Sigmoid colon (tissue), 7 donors: ENCODE measurements at regions of chr4 and their contacts with region 1.

Region 1: GRCh38 chr4:186067757-186068385 is 1.1 kb upstream of the TLR3 start:
- DNase-seq: peak; percentile 82
- H3K4me3 ChIP-seq: peak overlapping the region; percentile 46 to 58 (median 54)
- H3K27ac ChIP-seq: peak overlapping the region; percentile 58 to 80 (median 77)
- H3K4me1 ChIP-seq: peaks cover 0 to 19% (median 5%) of the 10 kb centered on the region in 4 donors
- H3K27me3 ChIP-seq: no peaks in the 10 kb centered on the region
- CTCF ChIP-seq: peak in 3 of 4 experiments; percentile 52 to 56 (median 55)
- EP300 ChIP-seq: no peak
- POLR2A ChIP-seq: no peak

Region 2: DNA sequence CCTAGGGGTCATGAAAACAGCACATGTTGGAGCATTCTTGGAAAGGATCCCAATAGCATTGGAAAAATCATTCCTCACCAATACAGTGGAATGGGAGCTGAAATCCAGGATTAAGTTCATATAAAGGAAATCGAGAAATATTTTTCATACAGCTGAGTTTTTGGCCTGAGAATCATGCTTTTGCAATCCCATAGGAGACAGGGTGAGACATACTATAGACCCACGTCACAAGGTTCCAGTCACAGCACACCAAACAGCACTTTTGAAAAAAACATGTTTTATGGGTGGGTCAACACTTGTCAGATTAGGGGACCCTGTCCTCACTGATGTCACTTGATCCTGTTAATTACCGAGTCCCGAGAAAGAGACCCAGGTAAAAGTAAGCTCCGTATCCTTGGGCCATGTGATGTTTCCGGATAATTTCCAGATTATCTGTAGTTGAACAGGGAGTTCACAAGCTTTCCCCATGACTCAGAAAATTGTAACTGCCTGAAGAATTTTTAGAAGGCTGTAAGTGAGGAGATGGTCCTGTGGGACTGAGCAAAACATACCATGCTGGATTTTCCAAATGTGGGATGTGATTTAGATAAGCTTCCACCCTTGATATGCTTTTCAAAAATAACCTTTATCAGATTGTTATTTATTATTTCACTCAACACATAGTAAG is 79.8 kb before region 1 on chr4:
- intact Hi-C with region 1: no loop called
- DNase-seq: no peak
- H3K4me3 ChIP-seq: no peak overlapping the region
- H3K27ac ChIP-seq: no peak overlapping the region
- H3K4me1 ChIP-seq: no peaks in the 10 kb centered on the region
- H3K27me3 ChIP-seq: no peaks in the 10 kb centered on the region
- CTCF ChIP-seq: no peak
- EP300 ChIP-seq: no peak
- POLR2A ChIP-seq: no peak

Region 3: GRCh38 chr4:186104114-186104889 is 36.4 kb after region 1 on chr4 and contains the start of gene FAM149A:
- intact Hi-C with region 1: loop called (anchors 2 kb)
- DNase-seq: peak; percentile 81
- H3K4me3 ChIP-seq: peak within 1 kb of the TSS; percentile 55 to 85 (median 72)
- H3K27ac ChIP-seq: peak within 1 kb of the TSS; percentile 53 to 72 (median 67)
- H3K4me1 ChIP-seq: peaks cover 0 to 18% (median 15%) of the 10 kb centered on the region in 4 donors
- H3K27me3 ChIP-seq: no peaks in the 10 kb centered on the region
- CTCF ChIP-seq: no peak
- EP300 ChIP-seq: no peak
- POLR2A ChIP-seq: no peak
- total RNA-seq, gene FAM149A: 14.6 to 26.0 (median 21.0) TPM

Region 4: GRCh38 chr4:186137196-186137794 is 69.4 kb after region 1 on chr4:
- intact Hi-C with region 1: loop called (anchors 1 kb)
- DNase-seq: no peak
- H3K4me3 ChIP-seq: peak overlapping the region in 2 of 4 donors; percentile 17 to 21
- H3K27ac ChIP-seq: no peak overlapping the region
- H3K4me1 ChIP-seq: peaks cover 0 to 7% (median 2%) of the 10 kb centered on the region in 4 donors
- H3K27me3 ChIP-seq: no peaks in the 10 kb centered on the region
- CTCF ChIP-seq: peak; percentile 17 to 69 (median 42)
- EP300 ChIP-seq: no peak
- POLR2A ChIP-seq: no peak

Region 5: GRCh38 chr4:186144142-186144955 is 76.5 kb after region 1 on chr4:
- intact Hi-C with region 1: loop called (anchors 2 kb)
- DNase-seq: peak; percentile 79
- H3K4me3 ChIP-seq: peak overlapping the region; percentile 55 to 70 (median 64)
- H3K27ac ChIP-seq: peak overlapping the region; percentile 88 to 94 (median 88)
- H3K4me1 ChIP-seq: peaks cover 0 to 16% (median 6%) of the 10 kb centered on the region in 4 donors
- H3K27me3 ChIP-seq: no peaks in the 10 kb centered on the region
- CTCF ChIP-seq: peak; percentile 21 to 52 (median 36)
- EP300 ChIP-seq: no peak
- POLR2A ChIP-seq: no peak

Region 6: GRCh38 chr4:186191200-186192065 is 123.6 kb after region 1 on chr4 and contains the start of gene CYP4V2:
- intact Hi-C with region 1: loop called (anchors 2 kb)
- DNase-seq: peak; percentile 91
- H3K4me3 ChIP-seq: peak within 1 kb of the TSS; percentile 79 to 89 (median 82)
- H3K27ac ChIP-seq: peak within 1 kb of the TSS; percentile 93 to 99 (median 98)
- H3K4me1 ChIP-seq: peaks cover 0 to 40% (median 31%) of the 10 kb centered on the region in 4 donors
- H3K27me3 ChIP-seq: no peaks in the 10 kb centered on the region
- CTCF ChIP-seq: peak in 1 of 4 experiments; percentile 6
- EP300 ChIP-seq: peak in 1 of 4 donors; percentile 4
- POLR2A ChIP-seq: peak; percentile 46 to 67
- total RNA-seq, gene CYP4V2: 30.0 to 75.3 (median 34.7) TPM

Region 7: DNA sequence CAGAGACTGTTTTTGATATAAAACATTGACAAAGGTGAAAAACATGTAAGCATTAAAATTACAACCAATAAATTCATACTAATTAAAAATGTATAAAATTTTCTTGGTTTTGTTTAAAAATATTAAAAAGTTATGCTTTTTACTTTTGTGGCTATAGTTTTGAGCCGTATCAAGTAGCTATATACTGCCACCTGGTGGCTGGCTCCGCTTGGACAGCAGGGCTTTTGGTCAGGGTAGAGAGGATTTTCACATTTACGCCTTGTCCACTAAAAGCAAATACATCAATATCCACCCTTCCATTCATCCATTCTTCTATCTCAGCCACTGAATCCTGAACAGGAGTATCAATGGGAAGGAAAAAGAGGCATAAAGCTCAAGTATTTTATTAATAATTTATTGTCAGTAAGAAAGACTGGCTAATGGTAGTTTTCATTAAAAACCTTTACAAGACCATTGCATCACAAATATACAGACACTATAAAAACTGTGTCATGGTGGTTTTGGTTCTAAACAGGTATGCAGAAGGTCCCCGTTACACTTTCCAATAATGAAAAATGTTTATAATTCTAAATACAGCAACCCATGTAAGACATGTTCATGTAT is 519.6 kb after region 1 on chr4:
- intact Hi-C with region 1: loop called (anchors 10 kb)
- DNase-seq: peak; percentile 83
- H3K4me3 ChIP-seq: no peak overlapping the region
- H3K27ac ChIP-seq: no peak overlapping the region
- H3K4me1 ChIP-seq: peaks cover 0 to 6% (median 0%) of the 10 kb centered on the region in 4 donors
- H3K27me3 ChIP-seq: no peaks in the 10 kb centered on the region
- CTCF ChIP-seq: peak; percentile 48 to 87 (median 76)
- EP300 ChIP-seq: no peak
- POLR2A ChIP-seq: no peak